ENCODE measurements at regions of chr9 and their contacts with region 1.

Region 1: DNA sequence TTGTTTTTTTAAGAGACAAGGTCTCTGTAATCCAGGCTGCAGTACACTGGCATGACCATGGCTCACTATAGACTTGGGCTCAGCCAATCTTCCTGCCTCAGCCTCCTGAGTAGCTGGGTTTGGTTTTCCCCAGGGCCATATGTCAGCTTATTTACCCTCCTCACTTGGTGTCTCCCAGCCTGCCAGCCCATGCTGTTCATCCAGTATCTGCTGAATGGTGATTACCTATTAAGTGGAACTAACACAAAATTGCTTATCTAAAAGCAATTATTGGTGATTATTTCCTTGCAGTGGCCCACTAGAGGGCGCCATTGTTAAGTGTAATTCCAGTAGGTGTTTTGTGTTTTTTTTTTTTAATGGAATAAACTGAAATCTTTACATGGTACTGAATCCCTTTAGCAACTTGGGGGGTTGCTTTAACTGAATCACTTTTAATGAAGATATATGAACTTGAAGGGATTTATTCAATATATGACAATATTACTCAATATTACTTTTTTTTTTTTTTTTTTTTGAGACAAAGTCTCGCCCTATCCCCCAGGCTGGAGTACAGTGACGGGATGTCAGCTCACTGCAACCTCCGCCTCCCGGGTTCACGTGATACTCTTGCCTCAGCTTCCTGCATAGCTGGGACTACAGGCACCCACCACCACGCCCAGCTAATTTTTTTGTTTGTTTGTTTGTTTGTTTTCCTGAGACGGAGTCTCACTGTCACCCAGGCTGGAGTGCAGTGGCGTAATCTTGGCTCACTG is 13.8 kb downstream of the EXOSC2 start:
- DNase-seq: no peak
- ATAC-seq: peak; percentile 18
- H3K4me3 Mint-ChIP-seq: no peak overlapping the region
- H3K27ac Mint-ChIP-seq: no peak overlapping the region
- H3K4me1 Mint-ChIP-seq: peaks cover 2% of the 10 kb centered on the region
- H3K27me3 Mint-ChIP-seq: no peaks in the 10 kb centered on the region
- CTCF ChIP-seq: peak; percentile 27

Region 2: DNA sequence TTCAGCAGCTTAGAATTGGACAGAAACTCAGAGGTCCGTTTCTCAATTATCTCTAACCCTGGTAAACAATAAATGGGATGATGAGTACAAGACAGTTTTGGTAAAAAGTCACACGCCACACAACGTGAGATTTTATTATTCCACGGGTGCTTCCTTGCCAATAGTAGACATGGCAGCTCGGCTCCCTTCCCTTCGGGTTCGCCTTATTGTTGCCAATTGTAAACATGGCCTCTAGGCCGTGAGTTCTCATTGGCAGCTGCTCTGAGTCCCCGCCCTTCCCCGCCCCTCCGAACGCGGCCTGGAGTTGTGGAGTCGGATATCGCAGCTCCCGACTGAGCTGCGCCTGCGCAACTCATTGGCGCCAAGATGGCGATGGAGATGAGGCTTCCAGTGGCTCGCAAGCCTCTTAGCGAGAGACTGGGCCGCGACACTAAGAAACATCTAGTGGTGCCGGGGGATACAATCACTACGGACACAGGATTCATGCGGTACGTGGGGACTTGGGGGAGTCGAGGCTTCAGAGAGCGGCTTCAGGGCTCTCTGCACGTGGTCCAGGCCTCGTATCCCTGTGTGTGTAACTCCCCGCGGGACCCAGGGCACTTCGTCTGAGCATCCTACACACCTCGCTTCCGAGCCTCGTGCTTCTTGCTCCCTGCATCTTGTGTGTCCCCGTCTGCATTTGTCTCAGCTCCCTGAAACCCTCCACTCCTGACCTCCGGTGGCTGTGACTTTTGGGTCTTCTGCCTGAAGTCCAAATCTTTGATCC is 13.8 kb before region 1 on chr9 and contains the start of gene EXOSC2:
- CTCF ChIA-PET with region 1: interaction called, 6 read pairs
- POLR2A ChIA-PET with region 1: interaction called, 15 read pairs
- intact Hi-C with region 1: loop called (anchors 1 kb)
- DNase-seq: peak; percentile 79
- ATAC-seq: peak; percentile 99
- H3K4me3 Mint-ChIP-seq: peak within 1 kb of the TSS; percentile 94
- H3K27ac Mint-ChIP-seq: peak within 1 kb of the TSS; percentile 93
- H3K4me1 Mint-ChIP-seq: peaks cover 30% of the 10 kb centered on the region
- H3K27me3 Mint-ChIP-seq: no peaks in the 10 kb centered on the region
- CTCF ChIP-seq: no peak
- total RNA-seq, gene EXOSC2: 49.6 and 54.8 TPM in 2 replicates

Region 3: DNA sequence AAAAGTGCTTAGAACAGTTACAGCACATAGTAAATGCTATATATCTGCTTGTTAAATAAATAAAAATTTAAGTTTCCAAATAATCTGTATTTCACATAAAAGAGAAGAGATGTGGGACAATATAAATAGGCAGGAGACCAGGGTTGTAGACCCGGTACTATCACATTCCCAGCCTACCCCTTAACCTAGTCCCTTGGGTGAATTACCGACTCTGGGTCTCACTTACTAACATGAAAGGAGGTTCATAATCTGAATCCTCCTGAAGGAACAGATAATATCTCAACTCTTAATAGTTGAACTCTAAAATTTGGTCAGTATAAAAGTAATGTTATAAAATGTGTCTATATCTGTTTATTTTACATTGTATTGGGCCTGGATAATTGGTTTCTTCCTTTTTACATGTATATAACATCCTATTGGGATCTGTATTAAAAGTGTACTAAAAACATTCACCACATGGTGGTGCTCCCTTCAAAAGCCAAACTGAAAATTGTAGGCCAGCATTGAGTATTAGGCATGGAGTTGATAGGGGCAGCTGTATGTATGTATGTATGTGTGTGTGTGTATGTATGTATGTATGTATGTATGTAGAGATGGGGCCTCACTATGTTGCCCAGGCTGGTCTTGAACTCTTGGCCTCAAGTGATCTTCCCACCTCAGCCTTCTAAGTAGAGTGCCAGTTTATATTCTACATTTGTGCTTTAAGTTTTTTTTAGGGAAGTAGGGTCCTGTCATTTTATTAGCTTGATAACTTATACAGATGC is 63.5 kb after region 1 on chr9:
- CTCF ChIA-PET with region 1: interaction called, 3 read pairs
- POLR2A ChIA-PET with region 1: no interaction called
- intact Hi-C with region 1: loop called (anchors 2 kb)
- DNase-seq: no peak
- ATAC-seq: peak; percentile 66
- H3K4me3 Mint-ChIP-seq: no peak overlapping the region
- H3K27ac Mint-ChIP-seq: no peak overlapping the region
- H3K4me1 Mint-ChIP-seq: peaks cover 34% of the 10 kb centered on the region
- H3K27me3 Mint-ChIP-seq: no peaks in the 10 kb centered on the region
- CTCF ChIP-seq: no peak

Region 4: DNA sequence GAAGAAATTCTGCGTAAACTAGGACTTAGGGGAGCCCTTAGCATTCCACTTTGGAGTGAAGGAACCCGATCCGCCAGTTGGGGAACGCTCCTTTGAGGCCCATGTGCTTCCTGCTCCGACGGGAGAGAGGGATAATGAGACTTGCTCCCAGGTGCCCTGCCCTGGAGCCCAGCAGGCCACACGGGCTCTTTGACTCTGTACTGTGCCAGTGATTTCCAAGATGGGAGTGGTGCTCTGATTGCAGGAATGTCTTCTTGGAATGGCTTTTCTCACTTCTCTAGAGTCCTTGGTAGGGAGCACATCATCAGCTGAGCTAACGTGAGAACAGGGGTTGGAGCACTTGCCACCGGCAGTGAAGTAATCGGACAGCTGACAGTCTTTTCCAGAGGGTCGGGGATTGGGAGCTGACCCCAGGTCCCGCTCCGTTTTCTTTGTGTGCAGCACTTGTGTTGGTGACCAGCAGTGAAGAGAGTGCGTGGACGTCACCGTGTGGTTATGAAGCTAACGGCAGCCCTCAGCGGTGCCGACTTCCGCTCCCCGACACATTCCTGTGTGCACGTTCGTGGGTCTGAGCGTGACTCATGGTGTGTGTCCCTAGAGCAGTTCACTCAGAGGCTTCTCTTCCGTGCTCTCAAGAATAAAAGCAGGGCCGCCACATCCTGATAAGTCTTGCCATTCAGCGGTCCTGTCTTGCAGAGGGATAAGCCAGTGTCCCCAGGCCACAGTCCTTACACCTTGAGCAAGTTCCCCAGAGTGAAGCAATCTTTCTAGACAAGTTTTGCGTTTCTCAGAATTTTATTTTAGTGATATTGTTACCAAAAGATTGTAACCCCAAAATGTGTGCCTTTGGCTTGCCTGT is 153.3 kb after region 1 on chr9:
- CTCF ChIA-PET with region 1: interaction called, 17 read pairs
- POLR2A ChIA-PET with region 1: no interaction called
- intact Hi-C with region 1: loop called (anchors 1 kb)
- DNase-seq: no peak
- ATAC-seq: no peak
- H3K4me3 Mint-ChIP-seq: no peak overlapping the region
- H3K27ac Mint-ChIP-seq: no peak overlapping the region
- H3K4me1 Mint-ChIP-seq: no peaks in the 10 kb centered on the region
- H3K27me3 Mint-ChIP-seq: no peaks in the 10 kb centered on the region
- CTCF ChIP-seq: no peak

Region 5: GRCh38 chr9:130866474-130866965 is 159.1 kb after region 1 on chr9:
- CTCF ChIA-PET with region 1: interaction called, 17 read pairs
- POLR2A ChIA-PET with region 1: no interaction called
- intact Hi-C with region 1: loop called (anchors 1 kb)
- DNase-seq: peak; percentile 33
- ATAC-seq: peak; percentile 56
- H3K4me3 Mint-ChIP-seq: no peak overlapping the region
- H3K27ac Mint-ChIP-seq: no peak overlapping the region
- H3K4me1 Mint-ChIP-seq: peaks cover 18% of the 10 kb centered on the region
- H3K27me3 Mint-ChIP-seq: no peaks in the 10 kb centered on the region
- CTCF ChIP-seq: no peak

Region 6: GRCh38 chr9:130940693-130941576 is 233.5 kb after region 1 on chr9:
- CTCF ChIA-PET with region 1: no interaction called
- POLR2A ChIA-PET with region 1: no interaction called
- intact Hi-C with region 1: loop called (anchors 1 kb)
- DNase-seq: peak; percentile 74
- ATAC-seq: peak; percentile 89
- H3K4me3 Mint-ChIP-seq: peak overlapping the region; percentile 53
- H3K27ac Mint-ChIP-seq: no peak overlapping the region
- H3K4me1 Mint-ChIP-seq: peaks cover 16% of the 10 kb centered on the region
- H3K27me3 Mint-ChIP-seq: peaks cover 44% of the 10 kb centered on the region
- CTCF ChIP-seq: peak; percentile 48